ENCODE measurements at regions of chr1 and their contacts with region 1.

Region 1: GRCh38 chr1:111709986-111710385 is 29.2 kb downstream of the INKA2 start:
- DNase-seq: no peak
- H3K4me3 ChIP-seq: no peak overlapping the region
- H3K27ac ChIP-seq: no peak overlapping the region
- H3K27me3 ChIP-seq: no peaks in the 10 kb centered on the region
- CTCF ChIP-seq: no peak

Region 2: GRCh38 chr1:111654839-111655238 is 55.1 kb before region 1 on chr1:
- CTCF ChIA-PET with region 1: no interaction called
- POLR2A ChIA-PET with region 1: no interaction called
- DNase-seq: no peak
- H3K4me3 ChIP-seq: no peak overlapping the region
- H3K27ac ChIP-seq: no peak overlapping the region
- H3K27me3 ChIP-seq: no peaks in the 10 kb centered on the region
- CTCF ChIP-seq: no peak

Region 3: GRCh38 chr1:111769517-111770146 is 59.6 kb after region 1 on chr1:
- CTCF ChIA-PET with region 1: interaction called, 102 read pairs
- POLR2A ChIA-PET with region 1: no interaction called
- DNase-seq: peak; percentile 41
- H3K4me3 ChIP-seq: no peak overlapping the region
- H3K27ac ChIP-seq: no peak overlapping the region
- H3K27me3 ChIP-seq: no peaks in the 10 kb centered on the region
- CTCF ChIP-seq: peak; percentile 80

Measured in AG04450 (cell line).